H1 (cell line): ENCODE measurements at regions of chr2 and their contacts with region 1.

Region 1: GRCh38 chr2:112121682-112122254 is 16.4 kb upstream of the FBLN7 start:
- DNase-seq: no peak
- H3K4me3 ChIP-seq: no peak overlapping the region
- H3K27ac ChIP-seq: no peak overlapping the region
- H3K4me1 ChIP-seq: no peaks in the 10 kb centered on the region
- H3K27me3 ChIP-seq: no peaks in the 10 kb centered on the region
- CTCF ChIP-seq: peak in 2 of 3 experiments; percentile 34 to 37; a peak in 2 of 4 replicates
- EP300 ChIP-seq: no peak
- POLR2A ChIP-seq: no peak
- RAD21 ChIP-seq: peak; percentile 67 to 78

Region 2: DNA sequence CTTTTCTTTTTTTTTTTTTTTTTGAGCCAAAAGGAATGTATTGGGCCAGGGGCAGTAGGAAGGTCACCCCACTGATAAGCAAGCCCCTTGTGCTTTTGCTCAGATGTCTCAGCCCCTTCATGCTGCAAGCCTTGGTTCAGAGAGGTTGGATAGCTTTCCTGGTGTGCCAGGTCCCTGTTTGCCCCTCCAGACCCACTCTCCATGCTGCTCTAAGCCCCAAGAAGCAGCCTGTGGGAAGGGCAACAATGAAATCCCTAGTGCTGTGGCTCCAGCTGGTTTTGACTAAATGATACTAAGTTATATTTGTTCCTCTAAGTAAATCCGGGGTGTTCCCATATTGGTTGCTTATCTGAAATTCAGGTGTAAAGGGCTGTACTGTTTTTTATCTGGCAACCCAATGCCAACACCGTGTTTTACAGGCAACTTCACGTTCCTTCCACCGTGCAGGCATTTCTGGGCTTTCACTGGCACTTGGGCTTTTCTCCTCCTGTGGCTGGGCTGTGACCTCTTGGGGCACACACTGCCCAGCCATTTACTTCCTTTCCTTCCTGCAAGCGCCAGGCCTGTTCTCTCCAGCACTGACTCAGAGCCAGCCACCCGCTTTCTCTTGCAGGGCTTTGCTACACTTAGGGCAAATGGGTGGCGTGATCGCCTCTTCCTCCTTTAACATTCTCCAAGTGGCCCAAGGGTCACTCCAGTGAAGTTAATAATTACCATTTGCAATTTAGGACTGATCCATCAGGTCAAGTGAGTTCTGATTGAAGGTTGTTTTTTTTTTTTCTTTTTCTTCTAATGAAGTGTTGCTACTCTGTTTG is 201.8 kb before region 1 on chr2:
- CTCF ChIA-PET with region 1: no interaction called
- POLR2A ChIA-PET with region 1: no interaction called
- DNase-seq: no peak
- H3K4me3 ChIP-seq: no peak overlapping the region
- H3K27ac ChIP-seq: no peak overlapping the region
- H3K4me1 ChIP-seq: no peaks in the 10 kb centered on the region
- H3K27me3 ChIP-seq: no peaks in the 10 kb centered on the region
- CTCF ChIP-seq: no peak
- EP300 ChIP-seq: no peak
- POLR2A ChIP-seq: no peak
- RAD21 ChIP-seq: no peak

Region 3: DNA sequence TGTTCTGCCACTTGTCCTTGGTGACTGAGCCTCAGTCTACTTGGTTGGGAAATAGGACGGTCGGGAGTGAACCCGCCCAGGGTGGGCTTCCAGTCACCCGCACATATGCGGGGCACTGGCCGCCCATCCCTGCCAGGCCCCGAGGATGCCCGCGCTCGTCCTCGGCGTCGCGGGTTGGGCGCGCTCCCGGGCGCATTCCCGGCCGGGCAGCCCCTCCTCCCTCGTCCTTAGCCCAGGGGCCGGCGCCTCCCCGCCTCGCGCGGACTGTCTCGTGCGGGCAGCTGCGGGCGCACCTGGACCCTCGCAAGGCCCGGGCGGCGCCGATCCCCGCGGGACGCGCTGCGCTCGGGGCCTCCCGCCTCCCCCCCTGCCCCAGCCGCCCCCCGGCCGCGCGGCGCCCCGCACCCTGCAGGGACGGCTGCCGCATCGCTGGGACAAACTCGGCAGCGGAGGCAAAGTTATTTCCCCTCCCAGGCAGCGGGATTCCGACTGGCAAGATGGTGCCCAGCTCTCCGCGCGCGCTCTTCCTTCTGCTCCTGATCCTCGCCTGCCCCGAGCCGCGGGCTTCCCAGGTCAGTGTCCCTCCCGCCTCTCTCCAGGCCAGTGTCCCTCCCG is 16.5 kb after region 1 on chr2 and contains the start of gene FBLN7:
- CTCF ChIA-PET with region 1: interaction called, 12 read pairs
- POLR2A ChIA-PET with region 1: interaction called, 3 read pairs
- DNase-seq: no peak
- H3K4me3 ChIP-seq: peak within 1 kb of the TSS; percentile 40 to 80 (median 64)
- H3K27ac ChIP-seq: no peak within 1 kb of the TSS
- H3K4me1 ChIP-seq: peaks cover 0 to 6% (median 6%) of the 10 kb centered on the region in 4 experiments; a peak in 4 of 7 replicates
- H3K27me3 ChIP-seq: peaks cover 29 to 65% (median 48%) of the 10 kb centered on the region in 4 experiments
- CTCF ChIP-seq: no peak
- EP300 ChIP-seq: no peak
- POLR2A ChIP-seq: no peak
- RAD21 ChIP-seq: no peak
- total RNA-seq, gene FBLN7: 0.30 and 0.82 TPM in 2 replicates

Region 4: GRCh38 chr2:112259509-112260294 is 137.9 kb after region 1 on chr2:
- CTCF ChIA-PET with region 1: interaction called, 10 read pairs
- POLR2A ChIA-PET with region 1: no interaction called
- DNase-seq: peak; percentile 62 to 86
- H3K4me3 ChIP-seq: no peak overlapping the region
- H3K27ac ChIP-seq: no peak overlapping the region
- H3K4me1 ChIP-seq: peaks cover 0 to 4% (median 0%) of the 10 kb centered on the region in 4 experiments; a peak in 2 of 7 replicates
- H3K27me3 ChIP-seq: no peaks in the 10 kb centered on the region
- CTCF ChIP-seq: peak; percentile 92 to 98 (median 96)
- EP300 ChIP-seq: no peak
- POLR2A ChIP-seq: no peak
- RAD21 ChIP-seq: peak; percentile 91